ENCODE measurements at regions of chr16 and their contacts with region 1.

Region 1: DNA sequence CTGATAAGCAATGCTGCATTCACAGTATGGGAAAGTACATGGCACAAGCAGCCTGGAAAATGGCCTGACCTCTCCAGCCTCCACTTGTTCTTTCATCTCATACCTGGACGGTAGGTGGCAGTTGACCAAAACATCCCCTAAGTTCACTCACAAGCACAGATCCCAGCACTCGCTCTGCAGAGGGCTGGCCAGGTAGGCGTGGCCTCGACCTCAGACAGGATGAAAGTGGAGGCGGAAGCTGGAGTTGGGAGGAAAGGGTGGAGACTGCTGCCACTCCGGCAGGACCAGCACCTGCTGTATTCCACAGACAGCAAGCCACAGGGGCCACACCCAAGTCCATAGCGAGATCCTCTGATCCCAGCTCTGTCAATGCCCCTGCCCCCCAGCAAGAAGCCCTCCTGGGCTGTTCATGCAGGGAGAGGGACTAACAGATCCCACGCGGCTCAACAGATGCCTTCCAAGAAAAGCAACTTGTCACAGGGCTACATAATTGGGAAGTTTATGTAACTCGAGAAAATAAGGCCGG is 31.3 kb downstream of the ZCCHC14 start:
- DNase-seq: peak; percentile 26 to 44
- ATAC-seq: peak in 1 of 2 donors; percentile 19
- H3K4me3 ChIP-seq: no peak overlapping the region
- H3K27ac ChIP-seq: peak overlapping the region; percentile 4 to 58 (median 48)
- H3K4me1 ChIP-seq: peaks cover 47 to 64% of the 10 kb centered on the region in 2 donors
- H3K27me3 ChIP-seq: no peaks in the 10 kb centered on the region
- CTCF ChIP-seq: peak in 3 of 5 experiments; percentile 20 to 36 (median 33)
- POLR2A ChIP-seq: no peak

Region 2: DNA sequence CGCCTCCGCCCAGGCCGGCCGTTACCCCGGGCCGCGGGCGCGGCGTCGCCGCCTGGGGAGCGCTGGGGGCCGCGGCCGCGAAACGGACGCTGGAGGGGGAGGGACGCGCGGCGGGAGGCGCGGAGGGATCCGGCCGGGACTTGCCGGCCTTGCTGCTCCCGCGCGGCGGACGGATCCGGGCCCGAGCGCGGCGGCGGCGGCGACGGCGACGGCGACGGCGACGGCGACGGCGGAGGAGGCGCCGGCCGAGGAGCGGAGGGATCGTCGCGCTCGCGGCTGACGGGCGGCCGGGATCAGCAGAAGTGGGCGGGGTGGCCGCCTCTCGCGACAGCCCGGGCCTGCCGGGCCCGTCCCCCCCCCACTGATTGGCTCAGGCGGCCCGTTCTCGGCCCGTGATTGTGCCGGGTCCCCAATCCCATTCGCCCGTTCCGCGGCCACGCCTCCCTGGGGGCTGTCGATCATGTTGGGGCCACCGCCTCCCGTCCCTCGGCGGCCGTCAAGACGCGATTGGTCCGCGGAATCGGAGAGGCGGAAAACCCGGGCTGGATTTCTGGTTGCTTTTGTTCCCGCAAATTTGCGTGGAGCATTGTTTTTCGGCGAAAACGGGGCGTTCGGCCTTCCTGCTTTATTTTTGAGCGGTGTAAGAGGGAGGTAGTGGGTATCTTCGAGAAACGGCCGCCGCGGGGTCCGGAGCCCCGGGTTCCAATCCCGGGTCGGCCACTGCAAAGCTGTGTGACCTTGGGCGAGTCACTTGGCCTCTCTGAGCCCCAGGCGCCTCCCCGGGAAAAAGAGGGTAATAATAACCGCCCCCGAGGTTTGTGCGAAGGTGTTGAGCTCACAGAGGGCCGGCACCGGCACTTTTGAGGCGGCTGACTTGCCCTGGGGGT is 31.4 kb after region 1 on chr16 and contains the start of gene ZCCHC14:
- in situ Hi-C with region 1: no loop called
- intact Hi-C with region 1: loop called (anchors 2 kb)
- DNase-seq: peak; percentile 99
- ATAC-seq: peak; percentile 88 to 92
- H3K4me3 ChIP-seq: peak within 1 kb of the TSS; percentile 53 to 66 (median 60)
- H3K27ac ChIP-seq: peak within 1 kb of the TSS; percentile 67 to 75 (median 72)
- H3K4me1 ChIP-seq: peaks cover 41 to 42% of the 10 kb centered on the region in 2 donors
- H3K27me3 ChIP-seq: no peaks in the 10 kb centered on the region
- CTCF ChIP-seq: peak in 2 of 5 experiments; percentile 6 to 35
- POLR2A ChIP-seq: peak; percentile 89 to 93
- total RNA-seq, gene ZCCHC14: 8.9 to 10.7 (median 9.3) TPM